ENCODE measurements at regions of chr7 and their contacts with region 1.

Region 1: DNA sequence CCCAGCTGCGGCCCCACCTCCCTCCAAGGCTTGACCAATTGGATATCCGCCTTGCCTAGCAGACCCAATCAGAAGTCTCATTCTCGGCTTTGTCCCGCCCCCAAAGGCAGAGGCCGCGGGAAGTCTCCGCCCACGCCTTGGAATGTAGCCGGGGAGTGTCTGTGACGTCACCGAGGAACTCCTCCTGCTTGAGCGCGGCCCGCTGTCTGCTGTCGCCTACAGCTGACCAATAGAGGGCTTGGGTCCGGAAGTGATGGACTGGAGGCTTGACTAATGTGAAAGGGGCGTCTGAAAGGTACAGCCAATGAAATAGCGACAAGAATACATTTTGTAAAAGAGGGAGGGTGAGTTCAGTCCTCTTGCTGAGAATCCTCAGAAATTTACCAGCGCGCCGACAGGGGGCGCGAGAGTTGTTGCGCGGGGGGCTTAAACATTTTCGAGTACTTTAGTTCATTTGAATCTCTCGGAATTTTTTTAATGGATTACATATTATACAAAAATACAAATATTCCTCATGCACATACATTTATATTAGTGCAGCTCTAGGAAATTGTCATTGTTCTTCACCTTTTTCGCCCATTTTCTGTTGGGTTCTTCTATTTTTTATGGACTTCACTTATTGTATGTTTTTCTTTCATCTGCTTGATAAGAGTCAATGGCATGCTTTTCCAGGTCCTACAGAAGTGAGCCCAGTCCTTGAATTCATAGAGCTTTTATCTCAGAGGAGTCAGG is 376 bp upstream of the CREB3L2 start:
- DNase-seq: peak; percentile 100
- H3K4me3 Mint-ChIP-seq: peak overlapping the region; percentile 87
- H3K27ac Mint-ChIP-seq: peak overlapping the region; percentile 94
- H3K4me1 Mint-ChIP-seq: peaks cover 29% of the 10 kb centered on the region
- H3K27me3 Mint-ChIP-seq: no peaks in the 10 kb centered on the region

Region 2: GRCh38 chr7:137923380-137923779 is 78.9 kb before region 1 on chr7:
- intact Hi-C with region 1: loop called (anchors 5 kb)
- DNase-seq: no peak
- H3K4me3 Mint-ChIP-seq: no peak overlapping the region
- H3K27ac Mint-ChIP-seq: peak overlapping the region; percentile 34
- H3K4me1 Mint-ChIP-seq: peaks cover 32% of the 10 kb centered on the region
- H3K27me3 Mint-ChIP-seq: no peaks in the 10 kb centered on the region

Region 3: DNA sequence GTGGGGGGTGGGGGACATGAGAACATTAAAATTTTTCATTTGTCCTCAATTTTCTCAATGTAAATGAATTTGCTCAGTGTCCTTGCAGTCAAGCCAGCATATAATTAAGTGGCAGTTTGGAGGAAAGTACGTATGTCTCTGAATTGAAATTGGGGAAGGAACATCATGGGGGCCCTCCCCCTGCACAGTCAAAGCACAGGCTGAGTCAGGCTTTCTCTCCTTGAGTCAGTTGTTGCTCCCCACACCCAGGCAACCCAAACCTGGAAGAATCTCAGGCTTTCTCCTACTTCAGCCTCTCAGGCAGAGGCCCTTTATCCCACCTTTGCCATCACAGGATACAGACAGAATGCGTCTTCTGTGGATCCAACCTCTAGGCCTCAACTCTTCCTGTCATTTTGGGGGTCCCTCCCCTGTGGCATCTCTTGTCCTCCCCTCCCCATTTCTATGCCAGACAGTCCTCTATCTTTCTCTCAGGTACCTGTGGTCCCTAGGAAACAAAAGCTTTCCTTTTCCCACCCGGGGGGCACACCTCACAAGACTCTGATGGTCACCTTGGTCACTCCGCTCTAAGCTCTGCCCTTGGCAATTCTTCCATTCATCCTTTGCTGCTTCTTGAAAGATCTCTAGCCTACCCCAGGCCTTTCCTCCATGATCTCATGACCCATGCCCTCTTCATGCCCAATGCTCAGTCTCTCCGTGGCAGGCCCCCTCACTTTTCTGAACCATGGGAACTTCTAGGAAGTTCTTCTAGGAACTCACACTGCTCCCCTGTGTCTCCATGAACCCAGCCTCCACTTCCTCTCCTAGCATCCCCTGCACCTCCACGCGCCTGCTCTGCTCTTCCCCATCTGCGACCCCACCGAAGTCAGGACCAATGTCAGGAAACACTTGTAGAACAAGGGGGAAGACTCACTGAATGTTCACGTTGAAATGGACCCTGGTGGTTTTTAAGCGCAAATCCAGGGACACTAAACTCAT is 40.8 kb before region 1 on chr7:
- intact Hi-C with region 1: loop called (anchors 1 kb)
- DNase-seq: no peak
- H3K4me3 Mint-ChIP-seq: no peak overlapping the region
- H3K27ac Mint-ChIP-seq: peak overlapping the region; percentile 34
- H3K4me1 Mint-ChIP-seq: peaks cover 19% of the 10 kb centered on the region
- H3K27me3 Mint-ChIP-seq: no peaks in the 10 kb centered on the region

Region 4: GRCh38 chr7:138875794-138876193 is 873.5 kb after region 1 on chr7:
- intact Hi-C with region 1: loop called (anchors 10 kb)
- DNase-seq: peak; percentile 92
- H3K4me3 Mint-ChIP-seq: no peak overlapping the region
- H3K27ac Mint-ChIP-seq: peak overlapping the region; percentile 46
- H3K4me1 Mint-ChIP-seq: peaks cover 18% of the 10 kb centered on the region
- H3K27me3 Mint-ChIP-seq: peaks cover 10% of the 10 kb centered on the region

Region 5: DNA sequence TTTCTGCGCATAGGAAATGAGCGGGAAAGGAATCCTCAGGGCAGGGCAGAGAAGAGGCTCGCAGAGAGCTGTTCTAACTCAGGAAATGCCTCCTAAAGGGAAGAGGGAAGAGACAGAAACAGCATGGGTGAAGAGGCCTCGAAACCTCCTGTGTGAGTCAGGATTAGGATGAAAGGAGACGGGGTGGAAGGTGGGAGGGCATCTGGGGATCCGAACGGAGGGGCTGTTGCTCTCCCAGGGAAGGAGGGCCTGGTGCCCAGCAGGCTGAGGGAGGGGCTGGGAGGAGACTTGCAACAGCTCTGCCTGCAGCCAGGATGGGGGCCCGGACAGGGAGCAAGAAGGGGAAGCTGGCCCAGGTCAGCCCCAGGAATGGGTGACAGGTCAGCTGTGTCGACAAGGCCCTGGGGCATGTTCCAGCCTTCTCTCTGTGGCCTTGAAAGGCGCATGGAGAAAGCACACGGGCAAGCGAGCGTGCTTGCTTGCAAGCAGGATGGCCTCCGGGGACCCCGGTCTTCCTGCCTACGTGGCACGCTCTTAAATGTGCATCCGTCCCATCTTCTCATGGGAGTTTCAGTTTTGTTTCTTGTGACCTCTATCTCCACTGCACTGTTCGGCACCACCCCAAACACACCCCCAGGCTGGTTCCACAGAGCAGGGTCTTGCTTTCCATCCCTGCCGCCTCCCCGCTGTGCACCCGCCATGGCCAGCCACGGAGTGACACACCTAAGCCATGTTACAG is 1712.1 kb after region 1 on chr7:
- intact Hi-C with region 1: no loop called
- DNase-seq: no peak
- H3K4me3 Mint-ChIP-seq: no peak overlapping the region
- H3K27ac Mint-ChIP-seq: no peak overlapping the region
- H3K4me1 Mint-ChIP-seq: no peaks in the 10 kb centered on the region
- H3K27me3 Mint-ChIP-seq: no peaks in the 10 kb centered on the region

Measured in activated CD4-positive, alpha-beta T cell treated with anti-CD3 and anti-CD28 coated beads, Interleukin-2, amount 10 ng/mL, durations not matched to agents 24 days and 14 days (primary cell).